Endothelial cell of umbilical vein (primary cell): ENCODE measurements at regions of chr6 and their contacts with region 1.

Region 1: DNA sequence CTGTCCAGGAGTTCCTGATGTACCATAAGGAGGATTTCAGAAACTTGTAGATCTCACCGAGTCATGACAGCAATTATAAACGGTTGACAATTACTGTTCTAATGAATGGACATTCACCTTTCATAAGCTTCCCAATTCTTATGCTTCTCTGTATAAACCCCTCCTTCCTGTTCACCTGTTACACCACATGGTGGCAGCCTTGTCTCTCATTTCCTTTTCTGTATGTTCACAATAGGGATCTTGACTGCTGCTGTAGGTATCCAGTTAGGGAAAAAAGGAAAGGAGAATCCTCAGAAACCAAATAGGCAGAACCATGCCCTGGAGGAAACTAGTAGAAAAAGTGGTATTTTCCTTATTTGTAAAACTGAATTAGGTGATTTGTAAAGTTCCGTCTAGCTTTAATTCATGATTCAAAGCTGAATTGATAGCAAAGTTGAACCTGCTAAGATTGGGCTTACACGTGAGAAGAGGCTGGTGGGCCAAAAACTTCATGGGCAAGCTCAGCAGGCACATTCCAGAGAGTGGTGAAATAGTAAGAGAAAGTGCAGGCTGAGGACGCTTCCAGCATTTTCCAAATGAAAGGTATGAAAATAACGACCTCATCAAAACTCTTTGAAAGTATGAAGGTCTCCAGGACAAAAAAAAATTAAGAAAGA is 29.0 kb upstream of the TBPL1 start:
- DNase-seq: peak; percentile 82
- H3K4me3 ChIP-seq: no peak overlapping the region
- H3K27ac ChIP-seq: no peak overlapping the region
- H3K4me1 ChIP-seq: no peaks in the 10 kb centered on the region
- H3K27me3 ChIP-seq: peaks cover 13 to 31% of the 10 kb centered on the region in 2 experiments
- CTCF ChIP-seq: peak; percentile 59 to 60
- POLR2A ChIP-seq: no peak

Region 2: GRCh38 chr6:132962936-132963868 is 960.9 kb before region 1 on chr6:
- CTCF ChIA-PET with region 1: interaction called, 15 read pairs
- POLR2A ChIA-PET with region 1: no interaction called
- dilution Hi-C with region 1: no loop called
- intact Hi-C with region 1: loop called (anchors 5 kb)
- DNase-seq: peak; percentile 82
- H3K4me3 ChIP-seq: no peak overlapping the region
- H3K27ac ChIP-seq: no peak overlapping the region
- H3K4me1 ChIP-seq: peaks cover 20% of the 10 kb centered on the region
- H3K27me3 ChIP-seq: peaks cover 4 to 6% of the 10 kb centered on the region in 2 experiments
- CTCF ChIP-seq: peak; percentile 71 to 75
- POLR2A ChIP-seq: no peak

Region 3: DNA sequence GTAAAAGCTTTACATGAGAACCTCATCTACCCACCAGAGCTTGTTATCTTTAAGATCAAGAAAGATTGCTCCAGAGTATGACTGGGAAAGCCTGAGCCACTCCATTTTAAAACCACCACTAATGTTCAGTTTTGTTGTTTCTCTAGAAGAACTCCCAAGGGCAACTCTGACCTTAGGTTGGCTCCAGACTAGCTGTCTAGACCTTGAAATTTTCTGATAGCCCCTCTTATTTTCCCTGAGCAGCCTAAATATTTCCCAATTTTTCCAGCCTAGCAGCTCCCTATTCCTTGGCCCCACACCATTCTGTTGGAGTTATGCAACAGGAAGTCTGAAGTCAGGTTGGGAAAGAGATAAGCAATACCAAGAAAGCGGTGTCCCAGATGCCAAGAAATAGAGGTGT is 119.8 kb before region 1 on chr6:
- CTCF ChIA-PET with region 1: no interaction called
- POLR2A ChIA-PET with region 1: no interaction called
- dilution Hi-C with region 1: no loop called
- intact Hi-C with region 1: no loop called
- DNase-seq: peak; percentile 8
- H3K4me3 ChIP-seq: no peak overlapping the region
- H3K27ac ChIP-seq: no peak overlapping the region
- H3K4me1 ChIP-seq: no peaks in the 10 kb centered on the region
- H3K27me3 ChIP-seq: no peaks in the 10 kb centered on the region
- CTCF ChIP-seq: no peak
- POLR2A ChIP-seq: no peak

Region 4: GRCh38 chr6:133939778-133940667 is 16.0 kb after region 1 on chr6:
- CTCF ChIA-PET with region 1: interaction called, 29 read pairs
- POLR2A ChIA-PET with region 1: no interaction called
- dilution Hi-C with region 1: no loop called
- intact Hi-C with region 1: no loop called
- DNase-seq: no peak
- H3K4me3 ChIP-seq: no peak overlapping the region
- H3K27ac ChIP-seq: no peak overlapping the region
- H3K4me1 ChIP-seq: no peaks in the 10 kb centered on the region
- H3K27me3 ChIP-seq: peaks cover 7 to 16% of the 10 kb centered on the region in 2 experiments
- CTCF ChIP-seq: no peak
- POLR2A ChIP-seq: no peak

Region 5: DNA sequence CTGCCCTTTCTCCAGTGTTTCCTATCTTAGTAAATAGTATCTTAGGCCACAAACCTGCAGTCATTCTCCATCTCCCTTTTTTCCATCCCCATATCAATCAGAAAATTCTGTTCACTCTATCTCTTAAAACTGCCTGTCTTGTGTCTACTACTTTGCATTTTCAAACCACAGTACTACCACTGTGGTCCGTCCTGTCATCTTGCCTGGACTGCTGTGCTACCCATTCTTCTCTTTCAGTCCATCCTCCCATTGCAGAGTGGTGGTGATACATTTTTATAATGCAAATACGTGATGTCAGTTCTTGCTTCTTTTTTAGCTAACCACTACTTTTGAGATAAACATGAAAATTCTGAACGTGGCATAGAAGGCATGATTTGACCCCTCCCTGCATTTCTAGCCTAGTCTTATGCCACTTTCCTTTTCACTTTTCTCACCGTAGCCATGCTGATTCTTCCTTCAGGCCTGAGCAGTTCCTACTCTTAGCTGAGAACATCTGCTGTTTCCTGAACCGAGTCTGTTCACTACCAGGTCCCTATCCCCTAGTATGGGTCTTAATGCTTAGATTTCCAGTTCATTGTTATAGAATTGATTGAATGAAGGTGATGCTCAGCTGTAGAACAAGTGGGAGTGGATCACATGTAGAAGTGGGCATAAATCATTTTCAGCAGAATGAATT is 42.7 kb after region 1 on chr6:
- CTCF ChIA-PET with region 1: interaction called, 12 read pairs
- POLR2A ChIA-PET with region 1: no interaction called
- dilution Hi-C with region 1: no loop called
- intact Hi-C with region 1: no loop called
- DNase-seq: no peak
- H3K4me3 ChIP-seq: no peak overlapping the region
- H3K27ac ChIP-seq: no peak overlapping the region
- H3K4me1 ChIP-seq: peaks cover 6% of the 10 kb centered on the region
- H3K27me3 ChIP-seq: no peaks in the 10 kb centered on the region
- CTCF ChIP-seq: no peak
- POLR2A ChIP-seq: no peak

Region 6: DNA sequence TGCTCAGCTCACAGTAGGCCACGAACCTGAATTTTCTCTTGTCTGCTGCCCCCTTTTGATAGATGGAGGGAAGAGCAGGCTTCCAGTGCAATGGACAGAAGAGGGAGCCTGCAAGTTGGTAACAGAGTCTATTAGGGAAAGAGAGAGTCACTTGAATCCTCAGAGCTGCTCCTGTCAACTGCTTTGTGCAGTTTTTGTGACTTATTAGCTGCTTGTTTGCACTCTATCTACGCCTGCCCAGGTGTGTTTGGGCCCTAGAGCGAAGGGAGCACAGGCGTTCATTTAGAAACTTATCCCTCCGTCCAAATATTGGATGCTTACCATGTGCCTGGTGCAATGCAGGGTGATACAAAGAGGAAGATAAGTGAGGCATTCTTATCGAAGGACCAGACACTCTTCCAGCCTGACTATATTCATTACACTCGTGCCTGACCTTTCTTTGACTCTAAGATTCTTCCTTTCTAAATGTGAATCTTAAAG is 139.9 kb after region 1 on chr6:
- CTCF ChIA-PET with region 1: interaction called, 133 read pairs
- POLR2A ChIA-PET with region 1: no interaction called
- dilution Hi-C with region 1: no loop called
- intact Hi-C with region 1: loop called (anchors 1 kb)
- DNase-seq: peak; percentile 80
- H3K4me3 ChIP-seq: no peak overlapping the region
- H3K27ac ChIP-seq: no peak overlapping the region
- H3K4me1 ChIP-seq: peaks cover 10% of the 10 kb centered on the region
- H3K27me3 ChIP-seq: no peaks in the 10 kb centered on the region
- CTCF ChIP-seq: peak; percentile 85 to 89
- POLR2A ChIP-seq: no peak

Region 7: GRCh38 chr6:134111062-134111677 is 187.1 kb after region 1 on chr6:
- CTCF ChIA-PET with region 1: interaction called, 19 read pairs
- POLR2A ChIA-PET with region 1: no interaction called
- dilution Hi-C with region 1: no loop called
- intact Hi-C with region 1: no loop called
- DNase-seq: peak; percentile 59
- H3K4me3 ChIP-seq: no peak overlapping the region
- H3K27ac ChIP-seq: no peak overlapping the region
- H3K4me1 ChIP-seq: no peaks in the 10 kb centered on the region
- H3K27me3 ChIP-seq: peaks cover 3 to 6% of the 10 kb centered on the region in 2 experiments
- CTCF ChIP-seq: peak; percentile 81 to 85
- POLR2A ChIP-seq: no peak